T-cell (primary cell): ENCODE measurements at regions of chr4 and their contacts with region 1.

Region 1: GRCh38 chr4:41981456-41981855 is at the start of gene DCAF4L1:
- DNase-seq: no peak
- ATAC-seq: no peak
- H3K4me3 ChIP-seq: no peak within 1 kb of the TSS
- H3K4me3 Mint-ChIP-seq: no peak within 1 kb of the TSS
- H3K27ac ChIP-seq: no peak within 1 kb of the TSS
- H3K27ac Mint-ChIP-seq: no peak within 1 kb of the TSS
- H3K4me1 ChIP-seq: no peaks in the 10 kb centered on the region
- H3K4me1 Mint-ChIP-seq: no peaks in the 10 kb centered on the region
- H3K27me3 ChIP-seq: no peaks in the 10 kb centered on the region
- H3K27me3 Mint-ChIP-seq: no peaks in the 10 kb centered on the region
- total RNA-seq, gene DCAF4L1: 0.10 to 0.55 (median 0.37) TPM

Region 2: DNA sequence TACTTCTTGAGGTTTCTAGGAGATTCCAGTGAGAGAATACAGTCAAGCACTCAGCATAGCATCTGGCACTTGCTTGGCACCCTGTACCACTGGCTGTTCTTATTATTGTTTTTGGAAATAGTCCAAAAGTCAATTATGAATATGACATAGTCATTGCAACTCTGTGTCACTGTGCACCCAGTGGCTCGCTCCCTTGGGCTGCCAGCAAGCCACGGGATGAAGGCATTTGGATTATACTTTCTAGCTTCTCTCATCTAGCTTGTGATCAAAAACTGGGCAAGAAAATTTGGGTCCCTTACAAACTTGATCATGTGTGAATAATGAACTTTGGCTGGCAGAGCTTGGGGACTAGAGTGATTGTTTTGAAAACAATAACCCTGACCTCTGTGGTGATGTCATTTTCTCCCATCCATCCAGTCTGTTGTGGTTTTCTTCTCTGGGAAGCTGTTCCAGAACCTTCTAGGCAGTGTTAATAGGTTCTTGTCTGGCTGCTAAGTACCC is 476.2 kb before region 1 on chr4:
- CTCF ChIA-PET with region 1: no interaction called
- POLR2A ChIA-PET with region 1: interaction called in 1 of 2 experiments, 11 read pairs
- DNase-seq: no peak
- ATAC-seq: no peak
- H3K4me3 ChIP-seq: no peak overlapping the region
- H3K4me3 Mint-ChIP-seq: no peak overlapping the region
- H3K27ac ChIP-seq: no peak overlapping the region
- H3K27ac Mint-ChIP-seq: no peak overlapping the region
- H3K4me1 ChIP-seq: no peaks in the 10 kb centered on the region
- H3K4me1 Mint-ChIP-seq: no peaks in the 10 kb centered on the region
- H3K27me3 ChIP-seq: no peaks in the 10 kb centered on the region
- H3K27me3 Mint-ChIP-seq: peaks cover 0 to 2% of the 10 kb centered on the region in 2 donors